CD4-positive, alpha-beta T cell (primary cell): ENCODE measurements at regions of chr10 and their contacts with region 1.

Region 1: DNA sequence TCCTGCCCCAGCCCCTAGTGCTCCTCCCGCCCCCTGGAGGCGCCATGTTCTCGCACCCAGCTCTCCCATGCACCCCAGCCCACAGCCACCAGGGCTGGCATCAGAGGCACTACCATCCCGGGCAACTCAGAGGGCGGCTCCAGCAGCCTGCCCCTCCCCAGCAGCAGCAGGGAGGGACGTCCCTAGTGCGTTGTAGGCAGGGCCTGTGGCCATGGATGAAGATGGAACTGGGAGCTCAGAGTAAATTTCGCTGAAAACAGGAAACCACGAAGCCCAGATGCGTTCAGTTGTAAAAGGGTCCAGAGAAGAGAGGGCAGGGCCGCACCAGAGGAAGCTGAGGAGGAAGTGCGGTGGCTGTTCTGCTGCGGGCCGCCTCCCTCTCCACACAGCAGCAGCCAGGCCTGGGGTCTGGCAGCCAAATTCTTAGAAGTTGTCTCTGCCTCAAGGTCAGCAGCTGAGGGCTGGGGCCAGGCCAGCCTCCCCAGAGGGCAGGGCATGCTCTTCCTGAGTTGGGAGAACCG is 24.6 kb downstream of the VSIR start:
- DNase-seq: peak; percentile 59 to 94 (median 74)
- ATAC-seq: peak; percentile 92
- H3K4me3 ChIP-seq: no peak overlapping the region
- H3K4me3 Mint-ChIP-seq: peak overlapping the region; percentile 75
- H3K27ac ChIP-seq: peak overlapping the region; percentile 74 to 75
- H3K27ac Mint-ChIP-seq: peak overlapping the region; percentile 96
- H3K4me1 ChIP-seq: peaks cover 100% of the 10 kb centered on the region
- H3K4me1 Mint-ChIP-seq: peaks cover 97% of the 10 kb centered on the region
- H3K27me3 ChIP-seq: no peaks in the 10 kb centered on the region
- H3K27me3 Mint-ChIP-seq: no peaks in the 10 kb centered on the region
- CTCF ChIP-seq: peak; percentile 47

Region 2: GRCh38 chr10:71512775-71513539 is 235.8 kb before region 1 on chr10:
- CTCF ChIA-PET with region 1: no interaction called
- POLR2A ChIA-PET with region 1: no interaction called
- intact Hi-C with region 1: no loop called
- DNase-seq: no peak
- ATAC-seq: no peak
- H3K4me3 ChIP-seq: no peak overlapping the region
- H3K4me3 Mint-ChIP-seq: no peak overlapping the region
- H3K27ac ChIP-seq: no peak overlapping the region
- H3K27ac Mint-ChIP-seq: no peak overlapping the region
- H3K4me1 ChIP-seq: no peaks in the 10 kb centered on the region
- H3K4me1 Mint-ChIP-seq: no peaks in the 10 kb centered on the region
- H3K27me3 ChIP-seq: no peaks in the 10 kb centered on the region
- H3K27me3 Mint-ChIP-seq: no peaks in the 10 kb centered on the region
- CTCF ChIP-seq: no peak

Region 3: DNA sequence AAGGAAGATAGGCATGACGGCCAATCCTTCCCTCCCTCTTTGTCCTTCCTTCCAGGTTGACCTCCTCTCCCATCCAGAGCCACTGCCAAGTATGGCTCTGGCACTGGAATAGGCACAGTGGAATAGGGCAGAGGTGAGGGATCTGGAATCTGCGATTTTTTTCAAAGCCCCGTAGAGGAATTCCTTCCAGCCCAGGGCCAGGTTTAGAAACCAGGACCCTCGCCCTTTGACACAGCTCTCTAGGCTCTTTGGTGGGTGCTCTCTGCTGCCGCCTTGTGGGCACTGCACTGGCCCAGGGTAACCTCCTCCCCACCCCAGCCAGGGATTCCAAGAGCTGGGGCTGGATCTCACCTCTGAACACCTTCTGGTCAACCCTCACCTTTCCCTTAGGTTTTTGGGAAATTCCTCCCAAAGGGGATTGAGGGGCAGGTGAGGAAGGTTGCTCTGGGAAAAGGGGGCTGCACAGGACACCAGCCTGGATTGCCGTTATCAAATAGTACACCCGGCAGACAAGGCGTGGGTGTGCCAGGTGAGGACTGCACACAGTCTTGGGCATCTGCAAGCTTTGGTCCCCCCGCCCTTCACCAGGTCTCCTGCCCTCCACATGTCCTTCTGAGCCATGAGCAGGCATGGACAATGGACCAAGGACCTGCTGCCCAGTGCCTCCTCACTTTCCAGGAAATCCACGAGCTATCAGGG is 52.0 kb before region 1 on chr10:
- CTCF ChIA-PET with region 1: no interaction called
- POLR2A ChIA-PET with region 1: interaction called, 20 read pairs
- intact Hi-C with region 1: no loop called
- DNase-seq: peak; percentile 54 to 84 (median 66)
- ATAC-seq: peak; percentile 83
- H3K4me3 ChIP-seq: no peak overlapping the region
- H3K4me3 Mint-ChIP-seq: no peak overlapping the region
- H3K27ac ChIP-seq: no peak overlapping the region
- H3K27ac Mint-ChIP-seq: peak overlapping the region; percentile 33
- H3K4me1 ChIP-seq: peaks cover 65% of the 10 kb centered on the region
- H3K4me1 Mint-ChIP-seq: peaks cover 29% of the 10 kb centered on the region
- H3K27me3 ChIP-seq: no peaks in the 10 kb centered on the region
- H3K27me3 Mint-ChIP-seq: no peaks in the 10 kb centered on the region
- CTCF ChIP-seq: peak; percentile 70

Region 4: GRCh38 chr10:71713135-71714030 is 35.3 kb before region 1 on chr10:
- CTCF ChIA-PET with region 1: interaction called, 5 read pairs
- POLR2A ChIA-PET with region 1: interaction called, 11 read pairs
- intact Hi-C with region 1: no loop called
- DNase-seq: peak in 5 of 14 experiments; percentile 17 to 64 (median 54)
- ATAC-seq: peak; percentile 32
- H3K4me3 ChIP-seq: peak overlapping the region; percentile 39
- H3K4me3 Mint-ChIP-seq: peak overlapping the region; percentile 80
- H3K27ac ChIP-seq: peak overlapping the region; percentile 74 to 90
- H3K27ac Mint-ChIP-seq: peak overlapping the region; percentile 98
- H3K4me1 ChIP-seq: peaks cover 83% of the 10 kb centered on the region
- H3K4me1 Mint-ChIP-seq: peaks cover 74% of the 10 kb centered on the region
- H3K27me3 ChIP-seq: no peaks in the 10 kb centered on the region
- H3K27me3 Mint-ChIP-seq: no peaks in the 10 kb centered on the region
- CTCF ChIP-seq: no peak

Region 5: GRCh38 chr10:71766702-71767419 is 18.1 kb after region 1 on chr10:
- CTCF ChIA-PET with region 1: interaction called, 27 read pairs
- POLR2A ChIA-PET with region 1: interaction called, 416 read pairs
- intact Hi-C with region 1: loop called (anchors 2 kb)
- DNase-seq: peak in 3 of 14 experiments; percentile 30 to 63 (median 56)
- ATAC-seq: no peak
- H3K4me3 ChIP-seq: peak overlapping the region; percentile 1
- H3K4me3 Mint-ChIP-seq: peak overlapping the region; percentile 70
- H3K27ac ChIP-seq: peak overlapping the region; percentile 71 to 74
- H3K27ac Mint-ChIP-seq: peak overlapping the region; percentile 95
- H3K4me1 ChIP-seq: peaks cover 94% of the 10 kb centered on the region
- H3K4me1 Mint-ChIP-seq: peaks cover 98% of the 10 kb centered on the region
- H3K27me3 ChIP-seq: no peaks in the 10 kb centered on the region
- H3K27me3 Mint-ChIP-seq: no peaks in the 10 kb centered on the region
- CTCF ChIP-seq: no peak